Activated CD4-positive, alpha-beta T cell treated with anti-CD3 and anti-CD28 coated beads for 36 hours (primary cell): ENCODE measurements at regions of chr15 and their contacts with region 1.

Region 1: DNA sequence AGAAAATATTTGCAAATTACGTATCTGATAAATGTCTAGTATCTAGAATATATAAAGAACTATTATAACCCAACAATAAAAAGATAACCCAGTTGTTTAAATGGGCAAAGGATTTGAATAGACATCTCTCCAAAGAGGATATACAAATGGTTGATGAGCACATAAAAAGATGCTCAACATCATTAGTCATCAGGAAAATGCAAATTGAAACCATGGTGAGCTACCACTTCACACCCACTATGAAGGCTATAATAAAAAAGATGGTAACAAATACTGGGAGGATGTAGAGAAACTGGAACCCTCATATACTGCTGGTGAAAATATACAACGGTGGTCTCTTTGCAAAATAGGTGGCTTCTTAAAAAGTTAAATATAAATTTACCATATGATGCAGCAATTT is 28.0 kb downstream of the RAD51 start:
- DNase-seq: no peak
- ATAC-seq: peak; percentile 76
- H3K4me3 Mint-ChIP-seq: no peak overlapping the region
- H3K27ac Mint-ChIP-seq: no peak overlapping the region
- H3K4me1 Mint-ChIP-seq: peaks cover 14% of the 10 kb centered on the region
- H3K27me3 Mint-ChIP-seq: no peaks in the 10 kb centered on the region

Region 2: DNA sequence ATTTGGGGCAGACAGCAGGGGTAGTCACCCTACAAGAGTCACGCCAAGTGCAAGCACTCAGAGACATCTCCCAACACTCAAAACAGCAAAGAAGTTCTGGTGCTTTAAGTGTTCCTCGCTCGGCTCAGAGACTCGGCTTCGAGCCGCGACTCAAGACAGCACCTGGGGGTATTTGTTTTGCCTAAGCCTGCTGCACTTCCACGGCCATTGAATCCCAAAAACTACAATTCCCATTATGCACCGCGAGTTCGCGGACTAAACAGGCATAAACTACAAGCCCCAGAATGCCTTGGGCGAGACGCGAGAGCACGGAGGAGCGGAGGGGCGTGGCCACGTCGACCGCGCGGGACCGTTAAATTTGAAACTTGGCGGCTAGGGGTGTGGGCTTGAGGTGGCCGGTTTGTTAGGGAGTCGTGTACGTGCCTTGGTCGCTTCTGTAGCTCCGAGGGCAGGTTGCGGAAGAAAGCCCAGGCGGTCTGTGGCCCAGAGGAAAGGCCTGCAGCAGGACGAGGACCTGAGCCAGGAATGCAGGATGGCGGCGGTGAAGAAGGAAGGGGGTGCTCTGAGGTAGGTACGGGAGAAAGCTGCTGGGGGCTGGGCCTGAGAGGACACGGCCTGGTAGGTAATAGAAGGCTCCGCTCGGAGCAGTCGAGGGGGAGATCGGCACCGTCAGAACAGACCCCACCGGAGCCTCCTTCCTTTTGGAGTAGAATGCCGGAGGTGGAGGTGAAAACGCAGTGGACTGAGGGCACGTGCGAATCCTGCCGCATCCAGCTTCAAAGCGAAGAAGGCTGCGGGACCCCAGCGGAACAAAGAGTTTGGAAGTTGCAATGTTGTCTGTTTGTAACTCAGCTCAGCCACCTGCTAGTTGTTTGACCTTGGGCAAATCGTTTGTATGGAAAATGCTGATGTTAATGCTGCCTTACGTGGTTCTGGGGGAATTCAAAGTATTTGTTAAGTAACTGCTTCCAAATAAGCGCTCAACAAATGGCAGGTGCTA is 561.9 kb before region 1 on chr15 and contains the start of gene BUB1B:
- CTCF ChIA-PET with region 1: no interaction called
- POLR2A ChIA-PET with region 1: no interaction called
- intact Hi-C with region 1: no loop called
- DNase-seq: peak; percentile 96
- ATAC-seq: peak; percentile 95
- H3K4me3 Mint-ChIP-seq: no peak within 1 kb of the TSS
- H3K27ac Mint-ChIP-seq: no peak within 1 kb of the TSS
- H3K4me1 Mint-ChIP-seq: peaks cover 8% of the 10 kb centered on the region
- H3K27me3 Mint-ChIP-seq: no peaks in the 10 kb centered on the region
- total RNA-seq, gene BUB1B: 95.3 to 99.5 TPM

Region 3: GRCh38 chr15:40769274-40770146 is 46.6 kb after region 1 on chr15 and contains the start of gene C15orf62:
- CTCF ChIA-PET with region 1: no interaction called
- POLR2A ChIA-PET with region 1: interaction called, 10 read pairs
- intact Hi-C with region 1: no loop called
- DNase-seq: peak; percentile 78
- ATAC-seq: peak; percentile 73
- H3K4me3 Mint-ChIP-seq: peak within 1 kb of the TSS; percentile 32
- H3K27ac Mint-ChIP-seq: peak within 1 kb of the TSS; percentile 88
- H3K4me1 Mint-ChIP-seq: peaks cover 37% of the 10 kb centered on the region
- H3K27me3 Mint-ChIP-seq: no peaks in the 10 kb centered on the region
- total RNA-seq, gene C15orf62: 0.58 to 0.80 TPM